Adrenal gland (tissue), 19 donors: ENCODE measurements at regions of chr14 and their contacts with region 1.

Region 1: GRCh38 chr14:35114034-35114433 is 7.8 kb downstream of the PPP2R3C start:
- DNase-seq: no peak
- H3K4me3 ChIP-seq: no peak overlapping the region
- H3K27ac ChIP-seq: no peak overlapping the region
- H3K4me1 ChIP-seq: no peaks in the 10 kb centered on the region
- H3K27me3 ChIP-seq: no peaks in the 10 kb centered on the region
- CTCF ChIP-seq: no peak
- POLR2A ChIP-seq: no peak

Region 2: DNA sequence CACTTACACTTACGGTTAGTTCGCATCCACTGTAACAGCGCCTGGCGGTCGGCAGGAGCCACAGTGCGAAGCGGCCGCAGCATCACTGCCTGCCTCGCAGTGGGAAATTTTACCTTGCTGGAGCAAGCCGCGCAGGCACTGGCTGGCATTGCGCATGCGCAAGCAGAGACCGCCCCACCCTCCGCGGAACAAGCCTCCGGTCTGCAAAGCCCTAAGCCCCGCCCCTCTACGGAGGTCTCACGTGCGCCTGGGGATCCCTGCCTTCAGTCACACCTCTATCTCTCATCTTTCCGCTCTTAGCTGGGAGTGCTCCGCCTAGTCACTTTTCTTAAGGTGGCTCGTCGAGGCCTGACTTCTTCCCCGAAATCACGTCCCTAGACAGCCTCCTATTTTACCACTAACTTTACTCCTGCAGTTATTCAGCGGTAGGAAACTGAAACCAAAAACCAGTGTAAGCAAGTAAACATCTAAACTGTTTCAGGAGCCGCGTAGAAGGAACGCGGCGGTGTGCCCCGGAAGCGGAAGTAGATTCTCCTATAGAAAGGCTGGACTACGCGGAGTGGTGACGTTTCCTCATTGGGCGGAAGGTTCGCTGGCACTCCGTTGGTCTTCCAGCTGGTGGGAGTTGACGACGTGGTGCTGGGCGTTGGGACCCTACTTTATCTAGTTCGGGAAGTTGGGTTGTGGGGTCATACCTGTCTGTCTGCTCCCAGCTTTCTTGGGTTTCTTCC is 131.5 kb before region 1 on chr14 and contains the start of gene SRP54:
- intact Hi-C with region 1: loop called in 1 of 2 experiments (anchors 10 kb)
- DNase-seq: peak; percentile 98 to 99 (median 99)
- H3K4me3 ChIP-seq: peak within 1 kb of the TSS; percentile 66 to 92 (median 74)
- H3K27ac ChIP-seq: peak within 1 kb of the TSS; percentile 94 to 99 (median 99)
- H3K4me1 ChIP-seq: peaks cover 18 to 43% of the 10 kb centered on the region in 2 donors
- H3K27me3 ChIP-seq: no peaks in the 10 kb centered on the region
- CTCF ChIP-seq: peak in 3 of 6 experiments; percentile 5 to 56 (median 13)
- POLR2A ChIP-seq: peak; percentile 89 to 98
- total RNA-seq, gene SRP54: 40.3 to 83.8 (median 56.8) TPM